ENCODE measurements at regions of chr10 and their contacts with region 1.

Region 1: GRCh38 chr10:44857363-44858016 is 53.6 kb upstream of the TMEM72 start:
- DNase-seq: peak; percentile 84
- ATAC-seq: peak; percentile 91
- H3K4me3 ChIP-seq: no peak overlapping the region
- H3K27ac ChIP-seq: no peak overlapping the region
- H3K4me1 ChIP-seq: peaks cover 4% of the 10 kb centered on the region; the same call in 1 of the 2 replicates
- H3K27me3 ChIP-seq: no peaks in the 10 kb centered on the region
- CTCF ChIP-seq: peak; percentile 94
- POLR2A ChIP-seq: no peak
- RAD21 ChIP-seq: peak; percentile 97

Region 2: GRCh38 chr10:44569193-44570091 is 288.0 kb before region 1 on chr10:
- CTCF ChIA-PET with region 1: no interaction called
- POLR2A ChIA-PET with region 1: no interaction called
- dilution Hi-C with region 1: no loop called
- in situ Hi-C with region 1: no loop called
- intact Hi-C with region 1: loop called (anchors 10 kb)
- DNase-seq: peak; percentile 89
- ATAC-seq: peak; percentile 86
- H3K4me3 ChIP-seq: no peak overlapping the region
- H3K27ac ChIP-seq: peak overlapping the region; percentile 48
- H3K4me1 ChIP-seq: peaks cover 10% of the 10 kb centered on the region
- H3K27me3 ChIP-seq: no peaks in the 10 kb centered on the region
- CTCF ChIP-seq: no peak
- POLR2A ChIP-seq: no peak
- RAD21 ChIP-seq: 0 out of 2 replicates have a peak, but pooled peaks have one; percentile 1

Region 3: DNA sequence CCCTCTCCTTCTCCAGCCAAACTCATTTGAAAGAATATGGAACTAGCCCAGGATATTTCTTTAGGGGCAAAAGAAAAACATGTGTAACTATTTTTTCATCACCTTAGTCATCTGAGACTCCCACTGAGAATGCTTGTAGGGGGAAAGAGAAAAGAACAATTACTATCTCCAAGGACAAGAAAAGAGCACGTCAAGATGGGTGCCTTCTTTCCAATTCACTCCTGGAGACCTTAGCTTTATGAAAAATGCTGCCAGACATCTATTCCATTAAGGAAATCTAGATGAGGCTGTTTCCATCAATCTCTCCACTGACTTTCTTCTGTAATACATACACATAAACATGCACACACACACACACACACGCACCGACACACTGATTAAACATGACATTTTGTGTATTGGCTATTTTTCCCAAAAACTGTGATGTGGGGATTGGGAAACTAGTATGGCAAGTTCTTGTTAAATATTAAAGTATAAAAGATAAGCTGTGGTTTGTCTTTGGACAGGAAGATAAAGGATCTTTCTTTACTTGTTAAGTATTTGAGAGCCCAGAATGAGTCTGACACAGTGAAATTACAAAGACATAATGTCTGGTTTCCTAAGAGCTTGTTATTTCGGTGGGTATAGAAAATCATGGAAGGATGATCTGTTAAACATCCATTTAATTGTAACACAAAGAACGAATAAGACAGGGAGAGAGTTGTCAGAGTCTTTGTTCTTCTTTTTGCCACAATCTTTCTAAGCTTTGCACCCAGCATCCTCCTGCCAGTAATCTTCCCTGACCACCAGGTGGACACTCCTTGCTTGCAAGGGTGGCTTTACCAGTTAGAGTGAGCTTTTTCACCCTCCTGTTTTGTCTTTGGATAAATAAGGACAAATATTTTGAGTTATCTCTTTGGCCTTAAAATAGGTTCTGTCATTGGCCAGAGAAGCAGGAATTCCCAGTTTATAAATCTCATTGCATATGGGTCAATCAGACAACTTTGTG is 123.7 kb before region 1 on chr10:
- CTCF ChIA-PET with region 1: no interaction called
- POLR2A ChIA-PET with region 1: no interaction called
- dilution Hi-C with region 1: no loop called
- in situ Hi-C with region 1: no loop called
- intact Hi-C with region 1: loop called (anchors 10 kb)
- DNase-seq: no peak
- ATAC-seq: no peak
- H3K4me3 ChIP-seq: no peak overlapping the region
- H3K27ac ChIP-seq: no peak overlapping the region
- H3K4me1 ChIP-seq: no peaks in the 10 kb centered on the region
- H3K27me3 ChIP-seq: no peaks in the 10 kb centered on the region
- CTCF ChIP-seq: peak; percentile 40
- POLR2A ChIP-seq: no peak
- RAD21 ChIP-seq: peak; percentile 37; the same call in 1 of the 2 replicates